AG04449 (cell line): ENCODE measurements at regions of chr3 and their contacts with region 1.

Region 1: GRCh38 chr3:173411375-173411973 is 13.9 kb downstream of the NLGN1 start:
- DNase-seq: no peak
- H3K4me3 ChIP-seq: no peak overlapping the region
- CTCF ChIP-seq: peak; percentile 39

Region 2: DNA sequence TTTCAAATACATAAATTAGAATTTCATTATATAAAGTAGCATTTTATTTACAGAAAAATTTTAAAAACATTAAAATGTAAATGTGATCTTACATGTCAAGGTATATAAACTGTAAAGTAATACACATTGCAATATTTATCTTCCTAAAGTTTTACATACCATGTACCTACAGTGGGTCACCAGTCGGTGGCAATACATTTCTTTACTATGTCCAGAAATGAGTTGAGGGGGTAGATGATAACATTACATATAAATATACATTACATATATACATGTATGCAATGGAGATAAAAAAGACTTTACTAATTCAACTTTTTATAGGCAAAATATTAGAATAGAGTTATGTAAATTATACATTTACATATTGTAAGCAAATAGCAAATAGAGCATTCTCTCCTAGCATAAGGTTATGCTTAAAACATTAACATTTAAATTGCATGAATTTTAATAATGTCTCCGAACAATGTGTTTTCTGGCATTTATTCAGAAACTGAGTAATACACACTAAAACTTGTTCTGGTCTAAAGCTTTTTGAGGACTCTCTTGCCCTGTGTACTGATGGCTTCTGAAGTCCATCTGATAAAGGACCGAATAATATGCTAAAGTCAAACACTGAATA is 107.2 kb before region 1 on chr3:
- CTCF ChIA-PET with region 1: no interaction called
- POLR2A ChIA-PET with region 1: no interaction called
- DNase-seq: no peak
- H3K4me3 ChIP-seq: no peak overlapping the region
- CTCF ChIP-seq: no peak

Region 3: GRCh38 chr3:173399044-173399443 is 12.4 kb before region 1 on chr3:
- CTCF ChIA-PET with region 1: interaction called, 10 read pairs
- POLR2A ChIA-PET with region 1: no interaction called
- DNase-seq: no peak
- H3K4me3 ChIP-seq: peak overlapping the region; percentile 18
- CTCF ChIP-seq: no peak